ENCODE measurements at regions of chr3 and their contacts with region 1.

Region 1: GRCh38 chr3:101779047-101779821 is at the start of gene NXPE3:
- DNase-seq: peak; percentile 92 to 97 (median 94)
- ATAC-seq: peak; percentile 88 to 90
- H3K4me3 Mint-ChIP-seq: peak within 1 kb of the TSS; percentile 90 to 98 (median 94)
- H3K27ac Mint-ChIP-seq: peak within 1 kb of the TSS; percentile 96 to 100 (median 99)
- H3K4me1 Mint-ChIP-seq: peaks cover 12 to 60% (median 56%) of the 10 kb centered on the region in 4 donors
- H3K27me3 Mint-ChIP-seq: no peaks in the 10 kb centered on the region
- polyA plus RNA-seq, gene NXPE3: 32.5 to 61.0 (median 50.2) TPM

Region 2: GRCh38 chr3:101676765-101677435 is 102.3 kb before region 1 on chr3 and contains the start of gene ZBTB11:
- POLR2A ChIA-PET with region 1: interaction called, 20 read pairs
- DNase-seq: peak; percentile 97 to 100 (median 100)
- ATAC-seq: peak; percentile 69 to 71
- H3K4me3 Mint-ChIP-seq: peak within 1 kb of the TSS; percentile 92 to 99 (median 96)
- H3K27ac Mint-ChIP-seq: peak within 1 kb of the TSS; percentile 94 to 99 (median 99)
- H3K4me1 Mint-ChIP-seq: peaks cover 15 to 54% (median 48%) of the 10 kb centered on the region in 4 donors
- H3K27me3 Mint-ChIP-seq: peaks cover 0 to 2% (median 0%) of the 10 kb centered on the region in 5 donors
- polyA plus RNA-seq, gene ZBTB11: 8.6 to 10.9 (median 9.5) TPM

Region 3: GRCh38 chr3:101685870-101686412 is 93.3 kb before region 1 on chr3:
- POLR2A ChIA-PET with region 1: interaction called, 21 read pairs
- DNase-seq: no peak
- ATAC-seq: peak; percentile 8 to 11
- H3K4me3 Mint-ChIP-seq: peak overlapping the region; percentile 87 to 100 (median 100)
- H3K27ac Mint-ChIP-seq: peak overlapping the region; percentile 97 to 100 (median 100)
- H3K4me1 Mint-ChIP-seq: peaks cover 16 to 67% (median 46%) of the 10 kb centered on the region in 4 donors
- H3K27me3 Mint-ChIP-seq: no peaks in the 10 kb centered on the region

Region 4: GRCh38 chr3:101724329-101725193 is 54.7 kb before region 1 on chr3 and contains the start of gene CEP97:
- POLR2A ChIA-PET with region 1: interaction called, 27 read pairs
- DNase-seq: peak; percentile 74 to 97 (median 82)
- ATAC-seq: peak; percentile 95
- H3K4me3 Mint-ChIP-seq: peak within 1 kb of the TSS; percentile 94 to 100 (median 98)
- H3K27ac Mint-ChIP-seq: peak within 1 kb of the TSS; percentile 94 to 99 (median 98)
- H3K4me1 Mint-ChIP-seq: peaks cover 15 to 42% (median 33%) of the 10 kb centered on the region in 4 donors
- H3K27me3 Mint-ChIP-seq: no peaks in the 10 kb centered on the region
- polyA plus RNA-seq, gene CEP97: 1.8 to 5.3 (median 3.5) TPM

Region 5: GRCh38 chr3:101791778-101792177 is 12.5 kb after region 1 on chr3:
- POLR2A ChIA-PET with region 1: interaction called, 19 read pairs
- DNase-seq: no peak
- ATAC-seq: no peak
- H3K4me3 Mint-ChIP-seq: peak overlapping the region in 6 of 10 donors; percentile 8 to 65 (median 42)
- H3K27ac Mint-ChIP-seq: peak overlapping the region; percentile 36 to 89 (median 74)
- H3K4me1 Mint-ChIP-seq: peaks cover 43 to 84% (median 74%) of the 10 kb centered on the region in 4 donors
- H3K27me3 Mint-ChIP-seq: no peaks in the 10 kb centered on the region